Aorta (tissue), 5 donors: ENCODE measurements at regions of chr3 and their contacts with region 1.

Region 1: DNA sequence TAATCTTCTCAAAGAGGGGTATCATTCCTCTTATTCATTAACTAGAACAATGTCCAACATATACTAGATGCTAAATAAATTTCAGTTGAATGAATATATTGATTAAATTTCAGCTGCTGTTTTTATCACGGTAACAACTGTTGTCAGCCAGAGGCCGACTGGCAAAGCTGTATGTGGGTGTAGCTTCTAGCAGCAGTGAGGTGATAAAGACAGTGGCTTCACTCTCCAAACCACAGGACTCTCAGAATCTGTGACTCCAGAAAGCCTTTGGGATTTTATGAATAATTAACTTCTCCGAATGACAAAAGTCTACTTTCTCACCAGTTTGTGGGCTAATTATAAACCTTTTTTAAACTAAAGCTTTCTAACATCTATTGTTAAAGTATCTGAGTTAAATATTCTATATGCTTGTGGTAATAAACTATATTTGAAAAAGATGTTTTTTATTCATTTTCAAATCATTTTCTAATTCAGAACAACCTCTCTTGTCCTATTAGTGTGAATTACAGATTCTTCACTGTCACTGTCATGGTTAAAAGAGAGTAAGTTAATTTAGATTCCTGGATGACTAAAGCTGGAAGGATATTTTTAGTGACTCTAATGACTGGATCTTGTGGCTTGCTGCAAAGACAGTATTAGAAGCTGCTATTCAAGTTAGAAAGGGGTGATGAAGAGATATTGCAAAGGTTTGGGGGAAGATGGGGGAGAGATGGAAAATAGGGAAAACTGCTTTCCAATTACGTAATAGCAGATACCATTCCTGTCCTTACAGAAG is 796.4 kb upstream of the ARPP21 start:
- DNase-seq: no peak
- ATAC-seq: no peak
- H3K4me3 ChIP-seq: no peak overlapping the region
- H3K27ac ChIP-seq: no peak overlapping the region
- H3K4me1 ChIP-seq: no peaks in the 10 kb centered on the region
- H3K27me3 ChIP-seq: no peaks in the 10 kb centered on the region

Region 2: GRCh38 chr3:34703053-34703452 is 139.8 kb before region 1 on chr3:
- intact Hi-C with region 1: loop called in 1 of 2 experiments (anchors 10 kb)
- DNase-seq: no peak
- ATAC-seq: no peak
- H3K4me3 ChIP-seq: no peak overlapping the region
- H3K27ac ChIP-seq: no peak overlapping the region
- H3K4me1 ChIP-seq: no peaks in the 10 kb centered on the region
- H3K27me3 ChIP-seq: no peaks in the 10 kb centered on the region

Region 3: GRCh38 chr3:34783876-34784275 is 59.0 kb before region 1 on chr3:
- intact Hi-C with region 1: no loop called
- DNase-seq: no peak
- ATAC-seq: no peak
- H3K4me3 ChIP-seq: no peak overlapping the region
- H3K27ac ChIP-seq: no peak overlapping the region
- H3K4me1 ChIP-seq: peaks cover 1 to 11% of the 10 kb centered on the region in 2 donors
- H3K27me3 ChIP-seq: no peaks in the 10 kb centered on the region

Region 4: GRCh38 chr3:34882764-34883163 is 39.9 kb after region 1 on chr3:
- intact Hi-C with region 1: no loop called
- DNase-seq: no peak
- ATAC-seq: no peak
- H3K4me3 ChIP-seq: no peak overlapping the region
- H3K27ac ChIP-seq: no peak overlapping the region
- H3K4me1 ChIP-seq: no peaks in the 10 kb centered on the region
- H3K27me3 ChIP-seq: no peaks in the 10 kb centered on the region